ENCODE measurements at regions of chr13 and their contacts with region 1.

Region 1: DNA sequence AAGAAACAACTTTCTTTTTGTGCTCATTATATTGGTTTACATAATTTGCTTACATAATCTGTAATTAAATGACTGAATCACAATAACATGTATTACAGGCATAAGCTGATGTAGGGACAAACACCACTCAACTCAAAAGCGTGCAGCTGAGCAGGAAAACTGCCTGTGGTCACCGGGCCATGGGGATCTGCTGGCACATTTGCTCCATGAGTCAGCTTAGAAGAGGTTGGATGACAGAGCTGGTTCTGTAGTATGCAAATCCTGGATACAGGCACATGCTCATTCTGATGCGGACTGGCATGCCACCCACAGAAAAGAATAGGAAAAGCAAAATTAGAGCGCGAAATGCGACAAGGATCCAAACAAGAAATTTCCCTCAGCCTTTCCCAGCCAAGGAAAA is 128.6 kb downstream of the USP12 start:
- DNase-seq: peak; percentile 37 to 88 (median 80)
- H3K4me3 ChIP-seq: peak overlapping the region in 5 of 59 donors; percentile 3 to 25 (median 16)
- H3K27ac ChIP-seq: peak overlapping the region in 47 of 59 donors; percentile 0 to 81 (median 54)
- H3K27me3 ChIP-seq: no peaks in the 10 kb centered on the region
- CTCF ChIP-seq: peak in 50 of 56 donors; percentile 13 to 76 (median 44)

Region 2: GRCh38 chr13:27006519-27007161 is 36.4 kb before region 1 on chr13:
- intact Hi-C with region 1: loop called in 1 of 2 experiments (anchors 5 kb)
- DNase-seq: peak in 9 of 10 donors; percentile 34 to 72 (median 57)
- H3K4me3 ChIP-seq: peak overlapping the region; percentile 36 to 77 (median 60)
- H3K27ac ChIP-seq: peak overlapping the region in 58 of 59 donors; percentile 31 to 96 (median 87)
- H3K27me3 ChIP-seq: peaks cover 0 to 4% (median 0%) of the 10 kb centered on the region in 45 donors
- CTCF ChIP-seq: peak in 3 of 56 donors; percentile 4 to 13 (median 10)

Region 3: GRCh38 chr13:27177852-27178251 is 134.8 kb after region 1 on chr13:
- intact Hi-C with region 1: loop called (anchors 5 to 10 kb)
- DNase-seq: no peak
- H3K4me3 ChIP-seq: no peak overlapping the region
- H3K27ac ChIP-seq: no peak overlapping the region
- H3K27me3 ChIP-seq: no peaks in the 10 kb centered on the region
- CTCF ChIP-seq: no peak